ENCODE measurements at regions of chr16 and their contacts with region 1.

Region 1: DNA sequence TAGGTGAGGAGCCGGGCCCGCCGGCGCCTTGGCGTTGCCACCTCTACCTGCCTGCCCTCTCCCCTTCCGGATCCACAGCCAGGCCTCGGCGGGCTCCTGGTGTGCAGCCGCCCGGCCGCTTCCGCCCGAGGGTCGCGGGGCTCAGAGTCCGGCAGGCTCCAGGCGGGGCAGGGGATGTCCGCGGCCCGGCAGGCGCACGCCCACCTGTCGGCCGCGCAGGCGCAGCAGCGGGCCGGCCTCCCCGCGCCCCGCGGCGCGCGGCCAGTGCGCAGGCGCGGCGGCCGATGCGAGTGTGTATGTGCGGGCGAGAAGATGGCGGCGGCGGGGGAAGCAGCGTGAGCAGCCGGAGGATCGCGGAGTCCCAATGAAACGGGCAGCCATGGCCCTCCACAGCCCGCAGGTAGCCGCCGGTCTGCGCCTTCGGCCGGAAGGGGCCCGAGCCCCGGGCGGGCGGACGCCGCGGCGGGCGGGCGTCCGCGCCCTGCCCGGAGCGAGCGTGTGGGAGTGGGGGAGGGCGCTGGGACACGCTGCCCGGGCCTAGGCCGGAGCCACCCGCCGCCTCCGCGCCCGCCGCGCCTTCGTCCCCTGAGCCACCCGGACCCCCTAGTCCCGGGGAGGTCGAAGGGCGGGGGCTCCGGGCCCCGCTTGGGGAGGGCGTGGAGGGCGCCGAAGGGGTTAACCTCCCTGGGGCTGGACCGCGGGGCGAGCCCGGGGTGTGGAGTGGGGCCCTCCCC is at the start of gene USP10:
- DNase-seq: peak; percentile 69 to 93 (median 83)
- ATAC-seq: peak; percentile 82
- H3K4me3 ChIP-seq: peak within 1 kb of the TSS; percentile 78 to 86
- H3K4me3 Mint-ChIP-seq: peak within 1 kb of the TSS; percentile 98
- H3K27ac ChIP-seq: peak within 1 kb of the TSS; percentile 67 to 68
- H3K27ac Mint-ChIP-seq: peak within 1 kb of the TSS; percentile 97
- H3K4me1 ChIP-seq: peaks cover 32% of the 10 kb centered on the region
- H3K4me1 Mint-ChIP-seq: peaks cover 43% of the 10 kb centered on the region
- H3K27me3 ChIP-seq: no peaks in the 10 kb centered on the region
- H3K27me3 Mint-ChIP-seq: no peaks in the 10 kb centered on the region
- CTCF ChIP-seq: no peak
- total RNA-seq, gene USP10: 104 to 107 TPM

Region 2: GRCh38 chr16:84647828-84648594 is 51.9 kb before region 1 on chr16 and contains the start of gene KLHL36:
- CTCF ChIA-PET with region 1: no interaction called
- POLR2A ChIA-PET with region 1: interaction called, 13 read pairs
- intact Hi-C with region 1: loop called (anchors 1 kb)
- DNase-seq: peak; percentile 53 to 84 (median 71)
- ATAC-seq: peak; percentile 84
- H3K4me3 ChIP-seq: peak within 1 kb of the TSS; percentile 59 to 63
- H3K4me3 Mint-ChIP-seq: peak within 1 kb of the TSS; percentile 87
- H3K27ac ChIP-seq: peak within 1 kb of the TSS; percentile 44 to 68
- H3K27ac Mint-ChIP-seq: peak within 1 kb of the TSS; percentile 90
- H3K4me1 ChIP-seq: peaks cover 45% of the 10 kb centered on the region
- H3K4me1 Mint-ChIP-seq: peaks cover 44% of the 10 kb centered on the region
- H3K27me3 ChIP-seq: no peaks in the 10 kb centered on the region
- H3K27me3 Mint-ChIP-seq: no peaks in the 10 kb centered on the region
- CTCF ChIP-seq: no peak
- total RNA-seq, gene KLHL36: 50.8 to 56.5 TPM